Endothelial cell of umbilical vein (primary cell): ENCODE measurements at regions of chr5 and their contacts with region 1.

Region 1: GRCh38 chr5:14946815-14947640 is 75.5 kb upstream of the ANKH start:
- DNase-seq: peak; percentile 30
- H3K4me3 ChIP-seq: no peak overlapping the region
- H3K27ac ChIP-seq: no peak overlapping the region
- H3K4me1 ChIP-seq: no peaks in the 10 kb centered on the region
- H3K27me3 ChIP-seq: peaks cover 0 to 10% of the 10 kb centered on the region in 2 experiments
- CTCF ChIP-seq: peak in 1 of 2 donors; percentile 35
- POLR2A ChIP-seq: no peak

Region 2: GRCh38 chr5:14816999-14817761 is 129.8 kb before region 1 on chr5:
- CTCF ChIA-PET with region 1: no interaction called
- POLR2A ChIA-PET with region 1: interaction called, 10 read pairs
- dilution Hi-C with region 1: no loop called
- intact Hi-C with region 1: no loop called
- DNase-seq: no peak
- H3K4me3 ChIP-seq: no peak overlapping the region
- H3K27ac ChIP-seq: no peak overlapping the region
- H3K4me1 ChIP-seq: peaks cover 11% of the 10 kb centered on the region
- H3K27me3 ChIP-seq: no peaks in the 10 kb centered on the region
- CTCF ChIP-seq: no peak
- POLR2A ChIP-seq: no peak

Region 3: GRCh38 chr5:14958196-14958595 is 11.2 kb after region 1 on chr5:
- CTCF ChIA-PET with region 1: no interaction called
- POLR2A ChIA-PET with region 1: no interaction called
- dilution Hi-C with region 1: no loop called
- intact Hi-C with region 1: no loop called
- DNase-seq: no peak
- H3K4me3 ChIP-seq: no peak overlapping the region
- H3K27ac ChIP-seq: no peak overlapping the region
- H3K4me1 ChIP-seq: no peaks in the 10 kb centered on the region
- H3K27me3 ChIP-seq: peaks cover 0 to 5% of the 10 kb centered on the region in 2 experiments
- CTCF ChIP-seq: no peak
- POLR2A ChIP-seq: no peak